ENCODE measurements at regions of chr2 and their contacts with region 1.

Region 1: DNA sequence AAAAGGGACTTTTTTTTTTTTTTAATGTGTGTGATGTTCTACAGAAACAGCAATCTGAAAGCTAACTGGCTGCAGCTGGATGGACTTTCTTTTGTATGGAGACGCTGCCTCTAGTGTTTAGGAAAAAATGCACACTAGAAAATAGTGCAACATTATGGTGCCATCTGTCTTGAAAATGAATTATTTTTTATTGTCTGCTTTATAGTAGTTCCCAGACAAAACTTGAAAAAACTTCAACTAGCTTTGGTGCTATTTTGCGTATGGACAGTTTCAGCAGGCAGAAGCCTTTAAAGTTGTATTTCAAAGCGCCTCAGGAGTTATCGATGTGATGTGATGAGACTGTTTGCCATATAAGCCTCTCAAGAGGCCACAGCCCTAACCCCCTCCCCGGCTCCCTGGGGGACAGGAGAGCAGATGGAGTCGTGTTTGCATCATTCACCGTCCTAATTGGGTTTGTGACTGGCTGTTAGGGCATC is 86.9 kb downstream of the LTBP1 start:
- ATAC-seq: peak; percentile 86 to 98 (median 96)
- H3K4me3 ChIP-seq: peak overlapping the region in 1 of 5 donors; percentile 19
- H3K27ac ChIP-seq: peak overlapping the region in 1 of 2 donors; percentile 6
- H3K4me1 ChIP-seq: peaks cover 15 to 24% of the 10 kb centered on the region in 2 donors

Region 2: DNA sequence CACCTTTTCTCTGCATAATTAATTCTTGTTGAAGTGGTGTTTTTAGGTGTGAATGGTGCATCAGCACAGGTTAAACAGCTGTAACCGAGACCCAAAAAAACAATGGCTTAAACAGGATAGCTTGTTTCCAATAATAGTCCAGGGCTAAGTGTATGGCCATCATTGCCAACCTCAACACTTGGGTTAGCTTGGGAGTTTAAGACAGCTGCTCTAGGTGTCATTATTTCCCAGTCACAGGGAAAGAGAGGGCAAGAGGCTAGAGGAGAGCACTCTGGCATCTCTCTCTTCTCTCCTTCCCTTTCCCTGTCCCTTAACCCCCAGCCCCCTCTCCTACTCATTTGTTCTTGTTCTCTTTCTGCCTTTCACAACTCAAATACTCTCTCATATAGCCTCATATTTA is 655.7 kb before region 1 on chr2:
- in situ Hi-C with region 1: no loop called
- ATAC-seq: no peak
- H3K4me3 ChIP-seq: no peak overlapping the region
- H3K27ac ChIP-seq: no peak overlapping the region
- H3K4me1 ChIP-seq: no peaks in the 10 kb centered on the region

Region 3: DNA sequence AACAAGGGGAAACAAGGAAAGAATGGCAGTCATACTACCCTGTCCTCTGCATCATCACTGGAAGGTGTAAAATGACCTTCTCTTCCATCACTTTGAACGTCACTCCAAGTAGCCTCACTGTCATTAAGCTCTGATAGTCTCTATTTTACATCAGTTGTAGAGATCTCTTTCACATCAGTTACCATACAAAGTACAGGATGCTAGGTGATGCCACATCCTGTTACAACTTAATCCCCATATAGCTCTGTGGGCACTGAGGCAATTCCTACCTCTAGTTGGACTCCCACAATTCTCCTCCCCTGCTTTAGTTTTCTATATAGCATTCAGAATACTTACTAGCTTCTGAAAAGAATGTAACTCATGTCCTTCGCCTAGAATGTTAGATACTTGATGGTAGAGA is 460.9 kb before region 1 on chr2:
- in situ Hi-C with region 1: no loop called
- ATAC-seq: no peak
- H3K4me3 ChIP-seq: no peak overlapping the region
- H3K27ac ChIP-seq: no peak overlapping the region
- H3K4me1 ChIP-seq: no peaks in the 10 kb centered on the region

Region 4: DNA sequence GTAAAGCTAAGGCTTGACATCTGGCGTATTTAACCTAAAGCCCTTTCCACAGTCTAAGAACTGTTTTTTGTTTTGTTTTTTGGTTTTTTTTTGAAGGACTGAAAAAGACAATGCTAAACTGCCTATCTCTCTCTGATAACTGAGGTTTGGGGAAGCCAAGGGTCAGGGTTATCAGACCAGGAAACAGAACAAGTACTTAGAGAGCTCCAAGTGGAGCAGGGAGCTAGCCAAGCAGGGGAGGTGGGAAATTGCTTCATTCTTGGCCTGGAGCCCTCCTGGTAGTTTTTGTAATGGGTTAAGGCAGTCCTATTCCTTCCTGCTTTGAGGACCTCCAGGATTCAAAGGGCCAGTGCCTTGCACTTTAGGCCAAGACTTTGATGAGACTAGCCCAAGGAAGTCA is 241.2 kb before region 1 on chr2:
- in situ Hi-C with region 1: loop called in 1 of 9 experiments (anchors 25 kb)
- ATAC-seq: no peak
- H3K4me3 ChIP-seq: no peak overlapping the region
- H3K27ac ChIP-seq: no peak overlapping the region
- H3K4me1 ChIP-seq: no peaks in the 10 kb centered on the region

Region 5: GRCh38 chr2:33395655-33396249 is 362.1 kb after region 1 on chr2:
- in situ Hi-C with region 1: loop called in 1 of 9 experiments (anchors 25 kb)
- ATAC-seq: peak in 3 of 8 experiments; percentile 57 to 65 (median 58)
- H3K4me3 ChIP-seq: no peak overlapping the region
- H3K27ac ChIP-seq: no peak overlapping the region
- H3K4me1 ChIP-seq: no peaks in the 10 kb centered on the region

Region 6: GRCh38 chr2:33599175-33599942 is 565.7 kb after region 1 on chr2 and contains the start of gene FAM98A:
- in situ Hi-C with region 1: loop called in 1 of 9 experiments (anchors 25 kb)
- ATAC-seq: peak; percentile 88 to 93 (median 90)
- H3K4me3 ChIP-seq: peak within 1 kb of the TSS; percentile 55 to 84 (median 65)
- H3K27ac ChIP-seq: peak within 1 kb of the TSS; percentile 79 to 86
- H3K4me1 ChIP-seq: peaks cover 3 to 8% of the 10 kb centered on the region in 2 donors
- total RNA-seq, gene FAM98A: 20.1 to 100 (median 40.7) TPM

Measured in motor neuron (in vitro differentiated cells).